Activated naive CD4-positive, alpha-beta T cell treated with anti-CD3 and anti-CD28 coated beads for 36 hours (primary cell): ENCODE measurements at regions of chr17 and their contacts with region 1.

Region 1: GRCh38 chr17:4966844-4967538 is 626 bp downstream of the SPAG7 start:
- DNase-seq: peak; percentile 97
- H3K4me3 Mint-ChIP-seq: no peak overlapping the region
- H3K27ac Mint-ChIP-seq: no peak overlapping the region
- H3K4me1 Mint-ChIP-seq: peaks cover 39% of the 10 kb centered on the region
- H3K27me3 Mint-ChIP-seq: no peaks in the 10 kb centered on the region

Region 2: GRCh38 chr17:4733073-4733531 is 233.9 kb before region 1 on chr17:
- CTCF ChIA-PET with region 1: no interaction called
- intact Hi-C with region 1: loop called (anchors 1 kb)
- DNase-seq: peak; percentile 39
- H3K4me3 Mint-ChIP-seq: no peak overlapping the region
- H3K27ac Mint-ChIP-seq: no peak overlapping the region
- H3K4me1 Mint-ChIP-seq: peaks cover 32% of the 10 kb centered on the region
- H3K27me3 Mint-ChIP-seq: peaks cover 1% of the 10 kb centered on the region

Region 3: DNA sequence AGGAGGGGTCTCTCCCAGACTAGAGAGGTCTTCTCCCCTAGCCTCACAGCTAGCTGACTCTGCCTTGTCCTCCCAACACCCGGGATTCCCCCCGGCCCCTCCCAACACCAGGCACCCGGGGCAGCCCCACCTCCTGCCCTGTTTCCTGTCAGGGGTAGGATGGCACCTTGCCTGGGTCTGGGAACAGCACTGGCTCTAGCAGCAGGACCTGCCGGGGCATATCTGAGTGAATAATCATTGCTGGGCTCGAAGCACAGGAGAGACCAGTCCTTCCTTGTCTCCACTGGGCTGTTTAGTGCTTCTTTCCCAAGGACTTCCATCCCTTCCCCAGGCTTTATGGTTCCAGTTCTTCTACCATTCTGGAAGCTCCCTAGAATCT is 108.1 kb before region 1 on chr17:
- CTCF ChIA-PET with region 1: no interaction called
- intact Hi-C with region 1: no loop called
- DNase-seq: peak; percentile 47
- H3K4me3 Mint-ChIP-seq: no peak overlapping the region
- H3K27ac Mint-ChIP-seq: no peak overlapping the region
- H3K4me1 Mint-ChIP-seq: peaks cover 14% of the 10 kb centered on the region
- H3K27me3 Mint-ChIP-seq: no peaks in the 10 kb centered on the region

Region 4: GRCh38 chr17:4948931-4949320 is 18.1 kb before region 1 on chr17:
- CTCF ChIA-PET with region 1: interaction called, 4 read pairs
- intact Hi-C with region 1: loop called (anchors 1 kb)
- DNase-seq: peak; percentile 78
- H3K4me3 Mint-ChIP-seq: peak overlapping the region; percentile 97
- H3K27ac Mint-ChIP-seq: peak overlapping the region; percentile 99
- H3K4me1 Mint-ChIP-seq: peaks cover 35% of the 10 kb centered on the region
- H3K27me3 Mint-ChIP-seq: no peaks in the 10 kb centered on the region

Region 5: DNA sequence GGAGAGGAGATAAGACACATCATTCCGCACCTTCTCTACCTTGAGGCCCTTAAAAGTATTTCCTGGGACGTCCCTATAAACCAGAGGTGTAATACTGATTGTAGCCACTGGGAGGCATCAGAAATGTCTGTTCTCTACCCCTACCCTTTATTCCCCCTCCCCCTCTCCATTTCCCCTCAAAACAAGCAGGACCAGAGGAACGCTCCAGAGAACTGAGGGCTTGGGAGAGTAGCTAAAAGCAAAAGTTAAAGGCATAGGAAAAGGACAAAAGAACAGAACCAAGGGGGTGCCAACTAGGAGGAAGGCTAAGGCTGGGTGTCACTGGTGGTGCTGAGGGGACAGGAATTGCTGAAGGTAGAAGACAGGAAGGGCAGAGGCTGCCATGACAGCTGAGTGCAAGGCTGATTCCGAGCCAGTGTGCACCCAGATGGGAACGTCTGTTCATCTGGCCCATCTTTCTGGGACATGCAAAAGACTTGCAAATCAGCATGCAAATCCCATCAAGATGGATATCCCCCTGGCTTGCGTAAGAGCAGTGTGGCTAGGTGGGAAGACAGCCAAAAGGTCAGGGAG is 13.7 kb after region 1 on chr17:
- CTCF ChIA-PET with region 1: interaction called, 17 read pairs
- intact Hi-C with region 1: no loop called
- DNase-seq: peak; percentile 62
- H3K4me3 Mint-ChIP-seq: no peak overlapping the region
- H3K27ac Mint-ChIP-seq: peak overlapping the region; percentile 67
- H3K4me1 Mint-ChIP-seq: peaks cover 23% of the 10 kb centered on the region
- H3K27me3 Mint-ChIP-seq: no peaks in the 10 kb centered on the region

Region 6: GRCh38 chr17:4997302-4998026 is 30.5 kb after region 1 on chr17 and contains the starts of genes INCA1 and KIF1C:
- CTCF ChIA-PET with region 1: no interaction called
- intact Hi-C with region 1: loop called (anchors 1 kb)
- DNase-seq: peak; percentile 93
- H3K4me3 Mint-ChIP-seq: peak within 1 kb of the TSS; percentile 83
- H3K27ac Mint-ChIP-seq: peak within 1 kb of the TSS; percentile 53
- H3K4me1 Mint-ChIP-seq: peaks cover 18% of the 10 kb centered on the region
- H3K27me3 Mint-ChIP-seq: no peaks in the 10 kb centered on the region
- total RNA-seq, gene INCA1: 0.21 to 0.54 TPM
- total RNA-seq, gene KIF1C: 30.5 to 31.1 TPM